Lower lobe of right lung (tissue), 2 donors: ENCODE measurements at regions of chr2 and their contacts with region 1.

Region 1: DNA sequence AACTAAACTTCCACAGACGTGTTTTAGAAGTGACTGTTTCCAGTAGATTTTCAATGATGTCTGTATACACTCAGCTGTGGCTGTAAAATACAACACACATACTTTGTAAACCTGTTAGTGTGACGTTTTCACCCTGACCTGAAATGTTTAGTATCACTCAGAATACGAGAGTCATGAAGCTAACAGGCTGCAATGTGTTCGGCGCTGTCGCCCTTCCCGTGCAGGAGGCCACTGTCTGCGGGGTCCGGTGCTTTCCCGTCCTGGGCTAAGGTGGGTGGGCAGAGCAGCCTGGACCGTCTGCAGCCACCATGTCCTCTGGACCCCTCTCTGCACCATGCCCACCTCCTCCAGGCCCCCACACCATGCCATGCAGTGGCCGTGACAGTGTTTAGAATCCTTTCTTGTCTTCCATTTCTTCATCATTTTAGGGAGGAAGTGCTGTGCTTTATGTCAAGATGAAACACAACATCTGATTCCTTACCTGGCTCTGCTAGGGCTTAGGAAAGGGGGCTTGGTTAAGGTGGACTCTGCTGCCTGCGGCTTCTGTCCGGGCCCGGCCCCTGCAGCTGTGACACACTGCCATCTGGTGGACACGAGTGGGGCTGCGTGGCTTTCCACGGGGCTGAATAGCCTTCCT is 53.8 kb upstream of the RBM44 start:
- DNase-seq: peak; percentile 84
- ATAC-seq: peak; percentile 85 to 90
- H3K4me3 ChIP-seq: no peak overlapping the region
- H3K27ac ChIP-seq: peak overlapping the region; percentile 63
- H3K4me1 ChIP-seq: peaks cover 58% of the 10 kb centered on the region
- H3K27me3 ChIP-seq: no peaks in the 10 kb centered on the region
- CTCF ChIP-seq: peak; percentile 97

Region 2: GRCh38 chr2:237581751-237582746 is 162.7 kb before region 1 on chr2:
- intact Hi-C with region 1: loop called (anchors 10 kb)
- DNase-seq: peak; percentile 74
- ATAC-seq: peak; percentile 81 to 85
- H3K4me3 ChIP-seq: peak overlapping the region; percentile 20
- H3K27ac ChIP-seq: peak overlapping the region; percentile 63
- H3K4me1 ChIP-seq: peaks cover 28% of the 10 kb centered on the region
- H3K27me3 ChIP-seq: no peaks in the 10 kb centered on the region
- CTCF ChIP-seq: peak; percentile 53

Region 3: DNA sequence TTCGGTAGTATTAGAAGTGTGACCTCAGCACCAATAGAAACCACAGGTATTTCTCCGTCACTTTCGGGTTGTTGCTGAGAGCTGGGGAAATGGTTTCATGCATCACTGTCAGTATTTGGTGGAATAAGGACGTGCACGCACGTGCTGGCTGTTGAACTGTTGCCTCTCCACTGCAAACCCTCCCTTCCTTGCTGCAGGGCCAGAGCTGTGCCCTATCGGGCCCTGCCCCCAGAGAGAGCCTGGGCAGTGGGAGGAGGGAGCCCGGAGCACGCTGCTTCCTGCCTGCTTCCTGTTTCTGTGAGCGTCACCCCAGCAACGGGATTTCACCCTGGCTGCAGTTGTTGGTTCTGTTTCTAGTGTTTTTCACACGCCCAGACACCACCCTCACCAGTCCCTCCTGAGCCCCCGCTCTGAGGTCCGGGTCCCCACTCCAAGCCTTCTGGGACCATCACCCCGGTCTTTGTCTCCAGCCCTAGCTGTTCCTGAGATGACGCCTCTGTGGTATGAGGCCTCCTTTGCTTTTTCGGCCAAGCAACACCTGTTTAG is 69.9 kb before region 1 on chr2:
- intact Hi-C with region 1: loop called (anchors 10 kb)
- DNase-seq: peak; percentile 94
- ATAC-seq: peak; percentile 92 to 93
- H3K4me3 ChIP-seq: peak overlapping the region; percentile 39
- H3K27ac ChIP-seq: peak overlapping the region; percentile 88
- H3K4me1 ChIP-seq: peaks cover 70% of the 10 kb centered on the region
- H3K27me3 ChIP-seq: no peaks in the 10 kb centered on the region
- CTCF ChIP-seq: no peak